ENCODE measurements at regions of chr9 and their contacts with region 1.

Region 1: GRCh38 chr9:99690573-99690972 is 131.1 kb upstream of the NR4A3 start:
- DNase-seq: no peak
- ATAC-seq: no peak
- H3K4me3 Mint-ChIP-seq: no peak overlapping the region
- H3K27ac Mint-ChIP-seq: no peak overlapping the region
- H3K4me1 Mint-ChIP-seq: no peaks in the 10 kb centered on the region
- H3K27me3 Mint-ChIP-seq: peaks cover 4% of the 10 kb centered on the region

Region 2: GRCh38 chr9:98922721-98923435 is 767.7 kb before region 1 on chr9:
- CTCF ChIA-PET with region 1: no interaction called
- POLR2A ChIA-PET with region 1: no interaction called
- intact Hi-C with region 1: no loop called
- DNase-seq: no peak
- ATAC-seq: no peak
- H3K4me3 Mint-ChIP-seq: no peak overlapping the region
- H3K27ac Mint-ChIP-seq: no peak overlapping the region
- H3K4me1 Mint-ChIP-seq: no peaks in the 10 kb centered on the region
- H3K27me3 Mint-ChIP-seq: peaks cover 4% of the 10 kb centered on the region

Region 3: GRCh38 chr9:99638971-99639370 is 51.6 kb before region 1 on chr9:
- CTCF ChIA-PET with region 1: interaction called, 4 read pairs
- POLR2A ChIA-PET with region 1: no interaction called
- intact Hi-C with region 1: loop called in 1 of 2 experiments (anchors 1 kb)
- DNase-seq: no peak
- ATAC-seq: no peak
- H3K4me3 Mint-ChIP-seq: no peak overlapping the region
- H3K27ac Mint-ChIP-seq: no peak overlapping the region
- H3K4me1 Mint-ChIP-seq: no peaks in the 10 kb centered on the region
- H3K27me3 Mint-ChIP-seq: peaks cover 12% of the 10 kb centered on the region

Region 4: DNA sequence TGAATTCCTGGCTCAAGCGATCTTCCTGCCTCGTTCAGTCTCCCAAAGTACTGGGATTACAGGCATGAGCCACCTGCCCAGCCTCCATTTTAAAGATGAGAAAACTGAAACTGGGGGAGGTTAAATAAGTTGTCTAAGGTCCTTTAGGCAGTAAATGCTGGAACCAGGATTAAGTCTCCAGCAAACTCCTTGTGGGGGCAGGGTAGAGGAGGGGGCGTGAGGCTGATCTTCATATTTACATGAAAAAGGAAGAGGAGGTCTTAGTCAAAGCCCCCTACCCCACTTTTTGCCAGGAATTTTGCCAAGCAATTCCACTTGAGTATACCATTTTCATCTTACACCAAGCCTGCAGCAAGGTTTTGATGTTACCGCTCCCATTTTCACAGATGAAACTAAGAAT is 54.5 kb after region 1 on chr9:
- CTCF ChIA-PET with region 1: no interaction called
- POLR2A ChIA-PET with region 1: no interaction called
- intact Hi-C with region 1: no loop called
- DNase-seq: no peak
- ATAC-seq: no peak
- H3K4me3 Mint-ChIP-seq: no peak overlapping the region
- H3K27ac Mint-ChIP-seq: no peak overlapping the region
- H3K4me1 Mint-ChIP-seq: no peaks in the 10 kb centered on the region
- H3K27me3 Mint-ChIP-seq: no peaks in the 10 kb centered on the region

Region 5: GRCh38 chr9:100505564-100506159 is 815.1 kb after region 1 on chr9:
- CTCF ChIA-PET with region 1: no interaction called
- POLR2A ChIA-PET with region 1: no interaction called
- intact Hi-C with region 1: no loop called
- DNase-seq: peak; percentile 87
- ATAC-seq: peak; percentile 33
- H3K4me3 Mint-ChIP-seq: no peak overlapping the region
- H3K27ac Mint-ChIP-seq: no peak overlapping the region
- H3K4me1 Mint-ChIP-seq: no peaks in the 10 kb centered on the region
- H3K27me3 Mint-ChIP-seq: peaks cover 2% of the 10 kb centered on the region